Psoas muscle (tissue), 8 donors: ENCODE measurements at regions of chr1 and their contacts with region 1.

Region 1: GRCh38 chr1:116418091-116418830 is 45.2 kb downstream of the ATP1A1 start:
- DNase-seq: peak; percentile 87 to 91
- ATAC-seq: peak; percentile 90 to 95 (median 92)
- H3K4me3 ChIP-seq: peak overlapping the region; percentile 83
- H3K27ac ChIP-seq: peak overlapping the region; percentile 60
- H3K4me1 ChIP-seq: peaks cover 16% of the 10 kb centered on the region
- H3K27me3 ChIP-seq: no peaks in the 10 kb centered on the region
- CTCF ChIP-seq: no peak

Region 2: DNA sequence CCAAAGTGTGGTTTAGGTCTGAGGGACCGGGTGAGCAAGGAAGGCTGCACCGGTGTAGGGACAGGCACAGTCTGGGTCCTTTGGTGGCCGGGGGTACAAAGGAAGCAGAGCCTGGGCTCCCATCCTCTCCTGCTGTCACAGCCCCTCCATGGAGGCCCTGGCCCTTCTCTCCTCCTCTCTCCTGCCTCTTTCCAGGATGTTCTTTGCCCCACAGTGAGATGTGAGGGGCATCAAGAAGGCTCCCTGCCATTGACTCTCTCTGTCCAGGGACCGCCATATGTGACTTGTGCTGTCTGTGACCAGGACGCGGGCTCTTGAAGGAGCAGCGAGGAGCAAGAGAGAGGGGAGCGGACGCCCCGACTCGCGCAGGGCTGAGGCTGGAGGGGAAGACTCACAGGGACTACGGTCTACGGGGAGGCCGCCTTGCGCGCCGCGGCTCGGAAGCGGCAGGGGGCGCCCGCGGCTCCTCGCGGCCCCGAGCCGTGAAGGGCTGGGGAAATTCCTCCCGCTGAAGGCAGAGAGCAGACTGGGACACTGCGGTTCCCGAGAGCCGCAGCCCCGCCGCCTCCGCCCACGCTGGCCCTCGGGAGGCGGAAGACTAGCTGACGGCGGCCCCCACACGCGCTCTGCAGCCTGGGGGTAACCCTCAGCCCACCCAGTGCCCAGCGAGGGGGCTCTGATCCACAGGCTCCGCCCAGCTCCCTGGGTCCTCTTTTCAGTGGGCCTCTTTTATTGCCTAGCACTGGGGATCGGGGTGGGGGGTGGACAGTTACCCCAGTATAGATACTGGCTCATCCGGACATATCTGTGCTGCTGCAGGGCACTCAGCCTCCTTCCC is 266.3 kb before region 1 on chr1:
- intact Hi-C with region 1: loop called in 1 of 2 experiments (anchors 5 kb)
- DNase-seq: peak; percentile 81 to 84
- ATAC-seq: peak; percentile 95 to 100 (median 97)
- H3K4me3 ChIP-seq: peak overlapping the region; percentile 61
- H3K27ac ChIP-seq: peak overlapping the region; percentile 9
- H3K4me1 ChIP-seq: peaks cover 12% of the 10 kb centered on the region
- H3K27me3 ChIP-seq: no peaks in the 10 kb centered on the region
- CTCF ChIP-seq: peak; percentile 96

Region 3: GRCh38 chr1:116218990-116219321 is 199.3 kb before region 1 on chr1:
- intact Hi-C with region 1: no loop called
- DNase-seq: no peak
- ATAC-seq: no peak
- H3K4me3 ChIP-seq: no peak overlapping the region
- H3K27ac ChIP-seq: no peak overlapping the region
- H3K4me1 ChIP-seq: no peaks in the 10 kb centered on the region
- H3K27me3 ChIP-seq: no peaks in the 10 kb centered on the region
- CTCF ChIP-seq: no peak

Region 4: DNA sequence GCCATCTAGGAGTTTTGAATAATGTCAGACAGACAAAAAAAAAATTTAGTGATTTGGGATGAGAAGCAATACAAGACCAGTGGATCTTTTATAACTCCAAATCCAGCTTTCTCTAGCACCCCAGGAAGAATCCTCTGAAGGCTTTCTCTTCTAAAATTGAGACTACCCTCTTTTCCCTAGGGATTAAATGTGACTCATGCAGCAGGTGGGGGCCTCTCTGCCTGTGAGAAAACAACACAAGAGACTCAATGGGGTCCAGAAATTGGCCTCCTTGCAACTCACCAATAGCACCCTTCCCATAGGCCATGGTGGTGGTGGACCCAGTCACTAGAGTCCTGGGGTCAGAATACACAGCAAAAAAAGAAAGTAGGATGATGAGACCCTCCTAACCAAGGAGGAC is 165.5 kb before region 1 on chr1:
- intact Hi-C with region 1: no loop called
- DNase-seq: no peak
- ATAC-seq: no peak
- H3K4me3 ChIP-seq: no peak overlapping the region
- H3K27ac ChIP-seq: no peak overlapping the region
- H3K4me1 ChIP-seq: peaks cover 13% of the 10 kb centered on the region
- H3K27me3 ChIP-seq: no peaks in the 10 kb centered on the region
- CTCF ChIP-seq: no peak

Region 5: DNA sequence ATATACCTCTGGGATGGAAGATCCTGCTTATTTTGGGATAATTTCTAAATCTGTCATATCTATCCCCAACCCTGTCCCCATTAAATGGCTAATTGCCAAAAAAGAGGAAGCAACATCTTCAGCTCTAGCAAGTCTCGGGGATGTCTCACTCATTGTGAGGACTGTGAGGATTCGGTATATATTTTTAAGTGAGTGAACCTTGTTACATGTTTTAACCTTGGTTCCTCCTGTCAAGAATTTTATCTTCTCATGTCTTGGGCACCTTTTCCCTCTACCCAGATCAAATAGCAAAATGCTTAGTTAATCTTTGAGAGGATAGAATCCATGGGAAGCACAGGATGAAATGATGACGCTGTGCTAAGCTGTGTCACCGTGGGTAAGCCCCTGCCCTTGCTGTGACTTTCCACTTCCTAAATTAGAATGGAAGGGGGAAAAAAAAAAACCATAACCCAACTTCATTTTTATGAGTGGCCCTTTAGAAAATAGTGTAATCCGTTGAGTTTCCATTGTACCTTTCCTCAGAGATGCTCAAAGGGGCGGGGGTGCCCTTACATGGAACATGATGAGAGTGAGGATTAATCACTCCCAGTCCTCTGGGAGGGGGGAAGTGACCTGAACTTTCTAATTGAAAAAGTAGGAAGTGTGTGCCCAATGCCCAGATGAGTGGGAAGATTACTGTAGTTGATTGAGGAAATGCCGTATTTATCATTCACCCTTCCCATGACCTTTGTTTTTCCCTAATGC is 37.6 kb before region 1 on chr1:
- intact Hi-C with region 1: loop called in 1 of 2 experiments (anchors 5 kb)
- DNase-seq: no peak
- ATAC-seq: no peak
- H3K4me3 ChIP-seq: no peak overlapping the region
- H3K27ac ChIP-seq: no peak overlapping the region
- H3K4me1 ChIP-seq: peaks cover 73% of the 10 kb centered on the region
- H3K27me3 ChIP-seq: no peaks in the 10 kb centered on the region
- CTCF ChIP-seq: no peak

Region 6: DNA sequence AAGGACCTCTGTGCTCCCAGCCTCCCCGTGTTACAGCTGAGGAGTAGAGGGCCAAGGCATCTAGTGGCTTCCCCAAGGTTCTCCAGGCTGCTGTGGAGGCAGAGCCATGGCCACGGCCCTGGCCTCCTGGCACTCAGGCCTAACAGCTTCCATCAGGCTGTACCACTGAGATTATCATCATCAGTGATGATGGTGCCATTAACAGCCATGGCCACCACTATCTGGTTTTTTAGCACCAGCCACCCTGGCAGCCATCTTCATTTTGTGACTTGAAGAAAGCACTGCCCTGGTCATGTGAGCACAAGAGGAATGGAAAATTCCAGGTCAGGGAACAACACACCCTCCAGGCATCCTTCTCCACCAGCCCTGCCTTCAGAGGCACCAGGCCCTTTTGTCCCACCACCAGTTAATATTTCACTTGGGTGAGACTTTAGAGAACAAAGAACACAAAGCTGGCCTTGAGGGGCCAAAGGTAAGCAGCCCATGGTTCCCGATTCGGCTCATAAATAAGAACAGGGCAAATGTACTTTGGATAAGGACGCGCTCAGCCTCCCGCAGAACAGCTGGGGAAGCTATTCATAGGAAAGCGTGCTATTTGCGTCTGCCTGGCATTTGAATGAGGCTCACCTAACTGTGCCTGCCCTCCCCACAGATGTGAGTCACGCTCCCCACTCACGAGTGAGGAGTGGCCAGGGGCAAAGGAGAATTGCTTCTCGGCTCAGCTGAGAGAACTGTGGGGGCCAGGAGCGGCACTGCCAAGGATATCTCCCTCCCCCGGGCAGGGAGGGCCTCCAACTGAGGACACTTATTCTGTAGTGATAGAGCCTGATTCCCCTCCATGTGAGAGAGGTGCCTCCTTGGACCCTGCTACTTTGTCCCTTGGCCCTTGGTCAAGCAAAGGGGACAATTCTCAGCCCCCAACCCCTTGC is 56.9 kb after region 1 on chr1:
- intact Hi-C with region 1: loop called in 1 of 2 experiments (anchors 5 kb)
- DNase-seq: peak; percentile 59 to 90
- ATAC-seq: peak; percentile 91 to 93 (median 92)
- H3K4me3 ChIP-seq: peak overlapping the region; percentile 20
- H3K27ac ChIP-seq: peak overlapping the region; percentile 80
- H3K4me1 ChIP-seq: peaks cover 23% of the 10 kb centered on the region
- H3K27me3 ChIP-seq: no peaks in the 10 kb centered on the region
- CTCF ChIP-seq: no peak

Region 7: GRCh38 chr1:116570358-116571200 is 152.3 kb after region 1 on chr1 and contains the start of gene CD58:
- intact Hi-C with region 1: loop called in 1 of 2 experiments (anchors 10 kb)
- DNase-seq: peak; percentile 90 to 93
- ATAC-seq: peak; percentile 91 to 95 (median 94)
- H3K4me3 ChIP-seq: peak within 1 kb of the TSS; percentile 90
- H3K27ac ChIP-seq: peak within 1 kb of the TSS; percentile 95
- H3K4me1 ChIP-seq: no peaks in the 10 kb centered on the region
- H3K27me3 ChIP-seq: no peaks in the 10 kb centered on the region
- CTCF ChIP-seq: peak; percentile 64
- total RNA-seq, gene CD58: 4.7 to 8.9 (median 5.4) TPM

Region 8: DNA sequence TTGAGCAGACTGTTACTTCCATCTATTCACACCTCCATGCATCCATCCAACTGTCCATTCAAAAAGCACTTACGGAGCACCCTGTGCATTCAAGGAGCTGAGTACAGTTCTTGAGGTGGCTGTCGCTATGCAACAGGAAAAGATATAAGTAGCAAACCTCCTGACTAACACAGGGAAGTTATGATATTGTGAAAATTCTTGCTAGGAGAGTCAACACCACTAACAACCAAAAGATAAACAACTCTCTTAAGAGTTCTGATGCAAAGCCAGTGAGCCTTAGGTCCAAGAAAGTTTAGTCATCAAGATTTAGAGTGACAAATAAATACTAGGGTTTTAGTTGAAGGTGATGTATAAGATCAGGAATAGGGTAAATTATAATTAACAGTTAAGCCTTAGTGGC is 747.8 kb after region 1 on chr1:
- intact Hi-C with region 1: no loop called
- DNase-seq: no peak
- ATAC-seq: no peak
- H3K4me3 ChIP-seq: no peak overlapping the region
- H3K27ac ChIP-seq: no peak overlapping the region
- H3K4me1 ChIP-seq: no peaks in the 10 kb centered on the region
- H3K27me3 ChIP-seq: no peaks in the 10 kb centered on the region
- CTCF ChIP-seq: no peak